ENCODE measurements at regions of chr7 and their contacts with region 1.

Region 1: GRCh38 chr7:117212969-117213877 is 109.6 kb downstream of the WNT2 start:
- DNase-seq: peak; percentile 66 to 75
- H3K4me3 ChIP-seq: no peak overlapping the region
- H3K4me3 Mint-ChIP-seq: no peak overlapping the region
- H3K27ac Mint-ChIP-seq: no peak overlapping the region
- H3K4me1 ChIP-seq: no peaks in the 10 kb centered on the region
- H3K4me1 Mint-ChIP-seq: peaks cover 7% of the 10 kb centered on the region
- H3K27me3 ChIP-seq: no peaks in the 10 kb centered on the region
- H3K27me3 Mint-ChIP-seq: no peaks in the 10 kb centered on the region
- CTCF ChIP-seq: peak; percentile 84 to 85

Region 2: DNA sequence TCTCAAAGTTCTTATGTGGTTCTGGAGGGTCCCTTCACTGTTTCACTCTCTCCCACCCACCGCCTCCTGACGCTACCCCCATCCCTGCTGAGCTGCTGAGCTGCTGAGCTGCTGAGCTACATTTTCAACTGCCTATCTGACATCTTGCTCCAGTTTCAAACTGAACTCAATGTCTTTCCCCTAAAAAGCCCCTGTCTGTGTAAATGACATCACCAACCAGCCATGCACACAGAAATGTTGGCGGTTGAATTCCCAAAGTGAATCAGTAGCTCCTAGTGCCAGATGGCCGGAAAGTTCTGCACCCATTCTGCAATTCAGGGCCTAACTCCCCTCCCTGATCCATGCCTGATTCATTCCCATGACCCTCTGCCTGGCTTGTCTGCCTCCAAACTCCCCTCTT is 38.5 kb after region 1 on chr7:
- CTCF ChIA-PET with region 1: no interaction called
- POLR2A ChIA-PET with region 1: no interaction called
- intact Hi-C with region 1: loop called (anchors 5 kb)
- DNase-seq: no peak
- H3K4me3 ChIP-seq: no peak overlapping the region
- H3K4me3 Mint-ChIP-seq: no peak overlapping the region
- H3K27ac Mint-ChIP-seq: no peak overlapping the region
- H3K4me1 ChIP-seq: 0 out of 2 replicates have a peak, but pooled peaks cover 5% of the 10 kb centered on the region
- H3K4me1 Mint-ChIP-seq: no peaks in the 10 kb centered on the region
- H3K27me3 ChIP-seq: no peaks in the 10 kb centered on the region
- H3K27me3 Mint-ChIP-seq: peaks cover 4% of the 10 kb centered on the region
- CTCF ChIP-seq: no peak

Region 3: GRCh38 chr7:117312598-117313580 is 99.7 kb after region 1 on chr7:
- CTCF ChIA-PET with region 1: no interaction called
- POLR2A ChIA-PET with region 1: no interaction called
- intact Hi-C with region 1: loop called (anchors 5 kb)
- DNase-seq: no peak
- H3K4me3 ChIP-seq: no peak overlapping the region
- H3K4me3 Mint-ChIP-seq: no peak overlapping the region
- H3K27ac Mint-ChIP-seq: no peak overlapping the region
- H3K4me1 ChIP-seq: no peaks in the 10 kb centered on the region
- H3K4me1 Mint-ChIP-seq: no peaks in the 10 kb centered on the region
- H3K27me3 ChIP-seq: no peaks in the 10 kb centered on the region; the same call in 1 of the 2 replicates
- H3K27me3 Mint-ChIP-seq: peaks cover 16% of the 10 kb centered on the region
- CTCF ChIP-seq: no peak

Region 4: GRCh38 chr7:117338020-117338419 is 124.8 kb after region 1 on chr7:
- CTCF ChIA-PET with region 1: interaction called, 4 read pairs
- POLR2A ChIA-PET with region 1: no interaction called
- intact Hi-C with region 1: loop called (anchors 1 kb)
- DNase-seq: no peak
- H3K4me3 ChIP-seq: no peak overlapping the region
- H3K4me3 Mint-ChIP-seq: no peak overlapping the region
- H3K27ac Mint-ChIP-seq: no peak overlapping the region
- H3K4me1 ChIP-seq: no peaks in the 10 kb centered on the region
- H3K4me1 Mint-ChIP-seq: peaks cover 8% of the 10 kb centered on the region
- H3K27me3 ChIP-seq: no peaks in the 10 kb centered on the region
- H3K27me3 Mint-ChIP-seq: peaks cover 24% of the 10 kb centered on the region
- CTCF ChIP-seq: no peak

Region 5: DNA sequence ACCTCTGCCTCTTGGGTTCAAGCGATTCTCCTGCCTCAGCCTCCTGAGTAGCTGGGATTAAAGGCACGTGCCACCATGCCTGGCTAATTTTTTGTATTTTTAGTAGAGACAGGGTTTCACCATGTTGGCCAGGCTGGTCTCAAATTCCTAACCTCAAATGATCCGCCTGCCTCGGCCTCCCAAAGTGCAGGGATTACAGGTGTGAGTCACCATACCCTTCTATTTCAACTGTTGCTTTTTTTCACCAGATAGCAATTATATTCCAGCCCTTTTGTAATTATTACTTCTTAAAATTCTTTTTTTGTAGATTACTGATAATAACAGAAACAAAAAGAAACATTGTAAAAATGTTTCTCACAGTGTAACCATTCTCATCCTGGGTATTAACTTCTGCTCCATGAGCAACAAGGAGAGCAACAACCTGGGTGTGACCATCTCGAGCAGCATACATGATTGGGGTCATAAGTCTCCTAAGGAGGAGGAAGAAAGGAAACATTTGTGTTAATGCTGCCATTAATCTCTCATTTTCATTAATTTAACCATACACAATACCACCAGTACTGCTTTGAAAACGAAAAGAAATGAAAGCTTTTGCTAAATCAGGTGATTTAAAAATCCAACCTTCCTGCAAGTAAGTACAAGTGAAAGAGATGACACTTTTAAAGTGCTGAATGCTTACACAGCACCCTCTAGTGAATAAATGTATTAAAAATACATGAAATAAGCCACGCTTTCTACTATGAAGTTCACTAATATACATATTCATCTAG is 172.3 kb after region 1 on chr7:
- CTCF ChIA-PET with region 1: interaction called, 3 read pairs
- POLR2A ChIA-PET with region 1: no interaction called
- intact Hi-C with region 1: loop called (anchors 1 kb)
- DNase-seq: no peak
- H3K4me3 ChIP-seq: no peak overlapping the region
- H3K4me3 Mint-ChIP-seq: no peak overlapping the region
- H3K27ac Mint-ChIP-seq: no peak overlapping the region
- H3K4me1 ChIP-seq: no peaks in the 10 kb centered on the region
- H3K4me1 Mint-ChIP-seq: no peaks in the 10 kb centered on the region
- H3K27me3 ChIP-seq: no peaks in the 10 kb centered on the region
- H3K27me3 Mint-ChIP-seq: no peaks in the 10 kb centered on the region
- CTCF ChIP-seq: peak; percentile 29 to 45

Region 6: DNA sequence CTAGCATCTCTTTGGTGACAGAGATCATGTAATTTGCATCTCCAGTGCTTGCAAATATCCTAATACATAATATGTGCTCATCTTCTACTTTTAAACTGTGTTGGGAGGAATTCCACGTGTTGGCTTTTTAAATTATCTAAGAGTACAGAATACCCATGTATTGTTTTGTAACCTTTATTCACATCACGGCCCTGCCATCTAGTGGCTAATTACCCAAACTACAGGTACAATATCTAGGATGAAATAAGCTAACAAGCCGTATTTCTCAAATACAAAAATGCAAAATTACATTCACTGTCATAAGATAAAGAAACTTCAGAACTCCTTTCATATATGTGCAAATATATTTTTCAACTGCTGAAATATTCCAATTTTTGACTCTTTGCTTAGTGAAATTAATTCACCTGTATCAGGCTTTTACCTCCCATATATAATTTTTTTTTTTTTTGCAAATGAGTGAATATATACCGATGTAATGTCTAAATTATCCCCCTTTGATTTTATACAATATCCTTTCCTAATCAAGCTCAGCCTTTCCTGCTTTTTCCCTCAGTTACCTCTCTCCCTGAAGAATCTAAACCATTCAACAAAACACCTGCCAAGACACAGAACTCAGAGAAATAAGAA is 940.4 kb after region 1 on chr7:
- CTCF ChIA-PET with region 1: interaction called, 3 read pairs
- POLR2A ChIA-PET with region 1: no interaction called
- intact Hi-C with region 1: loop called (anchors 2 kb)
- DNase-seq: peak in 1 of 2 experiments; percentile 48
- H3K4me3 ChIP-seq: no peak overlapping the region
- H3K4me3 Mint-ChIP-seq: no peak overlapping the region
- H3K27ac Mint-ChIP-seq: no peak overlapping the region
- H3K4me1 ChIP-seq: no peaks in the 10 kb centered on the region
- H3K4me1 Mint-ChIP-seq: no peaks in the 10 kb centered on the region
- H3K27me3 ChIP-seq: no peaks in the 10 kb centered on the region
- H3K27me3 Mint-ChIP-seq: peaks cover 23% of the 10 kb centered on the region
- CTCF ChIP-seq: peak; percentile 38 to 76

Region 7: GRCh38 chr7:118195837-118196474 is 982.7 kb after region 1 on chr7:
- CTCF ChIA-PET with region 1: no interaction called
- POLR2A ChIA-PET with region 1: no interaction called
- intact Hi-C with region 1: loop called (anchors 2 kb)
- DNase-seq: peak in 1 of 2 experiments; percentile 73
- H3K4me3 ChIP-seq: no peak overlapping the region
- H3K4me3 Mint-ChIP-seq: no peak overlapping the region
- H3K27ac Mint-ChIP-seq: no peak overlapping the region
- H3K4me1 ChIP-seq: no peaks in the 10 kb centered on the region
- H3K4me1 Mint-ChIP-seq: no peaks in the 10 kb centered on the region
- H3K27me3 ChIP-seq: no peaks in the 10 kb centered on the region
- H3K27me3 Mint-ChIP-seq: no peaks in the 10 kb centered on the region
- CTCF ChIP-seq: peak; percentile 69 to 76

Measured in Caco-2 (cell line).